Activated CD8-positive, alpha-beta memory T cell treated with anti-CD3 and anti-CD28 coated beads, Interleukin-2, amount 10 ng/mL, durations not matched to agents 7 days and 5 days (primary cell): ENCODE measurements at regions of chr13 and their contacts with region 1.

Region 1: DNA sequence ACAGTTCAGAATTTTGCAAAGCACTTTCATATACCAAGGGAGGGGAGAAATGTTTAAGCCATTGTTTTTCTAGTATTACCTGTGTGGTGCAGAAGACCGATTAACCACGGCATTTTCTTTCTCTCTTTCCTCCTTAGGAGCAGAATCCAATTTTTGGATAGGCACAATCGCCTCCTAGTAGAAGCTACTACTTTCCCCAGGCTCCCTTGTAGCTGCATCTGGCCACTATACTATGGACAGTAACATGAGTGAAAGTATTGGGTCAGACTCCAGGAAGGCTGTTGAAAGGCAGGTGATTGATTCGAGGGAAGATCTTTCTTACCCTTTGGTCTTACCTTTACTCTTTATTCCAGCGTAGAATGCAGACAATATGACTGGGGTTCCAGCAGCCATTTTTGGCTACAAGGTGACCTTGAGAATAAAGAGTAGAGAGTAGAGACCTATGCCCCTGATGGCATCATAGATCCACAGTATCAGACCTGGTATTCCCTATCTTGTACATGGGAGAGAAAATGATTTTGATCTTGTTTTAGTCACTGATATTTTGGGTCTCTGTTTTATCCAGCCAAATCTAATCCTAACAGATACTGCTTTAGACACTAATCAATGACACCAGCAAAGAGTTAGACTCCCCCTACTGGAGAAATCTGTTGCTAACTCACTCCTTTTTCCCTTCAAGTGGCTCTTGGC is 77.0 kb downstream of the LRRC63 start:
- DNase-seq: no peak
- ATAC-seq: peak; percentile 87
- H3K4me3 Mint-ChIP-seq: no peak overlapping the region
- H3K27ac Mint-ChIP-seq: peak overlapping the region; percentile 34
- H3K4me1 Mint-ChIP-seq: peaks cover 15% of the 10 kb centered on the region
- H3K27me3 Mint-ChIP-seq: no peaks in the 10 kb centered on the region

Region 2: GRCh38 chr13:46278474-46278873 is 10.2 kb before region 1 on chr13:
- CTCF ChIA-PET with region 1: interaction called, 14 read pairs
- DNase-seq: no peak
- ATAC-seq: no peak
- H3K4me3 Mint-ChIP-seq: no peak overlapping the region
- H3K27ac Mint-ChIP-seq: no peak overlapping the region
- H3K4me1 Mint-ChIP-seq: no peaks in the 10 kb centered on the region
- H3K27me3 Mint-ChIP-seq: peaks cover 3% of the 10 kb centered on the region